ENCODE measurements at regions of chr5 and their contacts with region 1.

Region 1: GRCh38 chr5:140401362-140402257 is at the start of gene ANKHD1:
- DNase-seq: peak; percentile 99 to 100
- ATAC-seq: peak; percentile 89 to 92
- H3K4me3 ChIP-seq: peak within 1 kb of the TSS; percentile 80 to 100 (median 98)
- H3K27ac ChIP-seq: peak within 1 kb of the TSS; percentile 91 to 100 (median 98)
- H3K4me1 ChIP-seq: peaks cover 30 to 42% of the 10 kb centered on the region in 2 donors
- H3K27me3 ChIP-seq: no peaks in the 10 kb centered on the region
- CTCF ChIP-seq: no peak
- POLR2A ChIP-seq: peak; percentile 98 to 99
- total RNA-seq, gene ANKHD1: 51.3 to 93.6 (median 72.7) TPM

Region 2: GRCh38 chr5:140327589-140327988 is 74.0 kb before region 1 on chr5:
- in situ Hi-C with region 1: no loop called
- intact Hi-C with region 1: no loop called
- DNase-seq: no peak
- ATAC-seq: no peak
- H3K4me3 ChIP-seq: no peak overlapping the region
- H3K27ac ChIP-seq: no peak overlapping the region
- H3K4me1 ChIP-seq: peaks cover 19 to 20% of the 10 kb centered on the region in 2 donors
- H3K27me3 ChIP-seq: no peaks in the 10 kb centered on the region
- CTCF ChIP-seq: no peak
- POLR2A ChIP-seq: no peak

Region 3: DNA sequence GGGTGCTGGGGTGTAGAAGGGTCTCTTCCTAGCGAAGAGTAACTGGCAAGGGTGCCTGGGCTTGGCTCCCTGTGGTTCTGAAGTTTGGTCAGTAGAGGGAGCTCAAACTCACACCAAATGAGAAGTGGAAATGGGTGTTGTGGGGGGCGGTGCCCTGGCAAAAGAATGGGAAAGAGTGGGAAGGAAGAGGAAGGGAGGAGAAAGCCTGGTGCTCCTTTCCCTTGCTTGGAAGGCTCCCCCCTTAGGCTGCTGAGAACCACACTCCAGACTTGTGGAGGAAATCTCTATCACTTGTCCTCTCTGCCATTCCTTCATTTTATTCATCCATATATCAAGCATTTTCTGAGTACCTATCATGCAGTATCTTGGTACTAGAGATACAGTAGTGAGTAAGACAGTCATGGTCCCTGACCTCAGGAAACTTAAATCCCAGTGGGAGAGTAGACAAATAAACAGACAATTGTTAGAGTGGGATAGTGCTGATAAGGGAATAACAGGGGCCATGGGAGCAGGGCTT is 28.6 kb before region 1 on chr5:
- in situ Hi-C with region 1: no loop called
- intact Hi-C with region 1: loop called (anchors 2 kb)
- DNase-seq: peak in 1 of 2 donors; percentile 62
- ATAC-seq: peak; percentile 71 to 81
- H3K4me3 ChIP-seq: no peak overlapping the region
- H3K27ac ChIP-seq: no peak overlapping the region
- H3K4me1 ChIP-seq: no peaks in the 10 kb centered on the region
- H3K27me3 ChIP-seq: no peaks in the 10 kb centered on the region
- CTCF ChIP-seq: peak; percentile 55 to 84 (median 80)
- POLR2A ChIP-seq: no peak

Region 4: GRCh38 chr5:140547508-140548299 is 146.1 kb after region 1 on chr5 and contains the start of gene EIF4EBP3:
- in situ Hi-C with region 1: no loop called
- intact Hi-C with region 1: loop called (anchors 2 kb)
- DNase-seq: peak; percentile 96 to 98
- ATAC-seq: peak; percentile 71 to 75
- H3K4me3 ChIP-seq: peak within 1 kb of the TSS; percentile 54 to 79 (median 78)
- H3K27ac ChIP-seq: peak within 1 kb of the TSS; percentile 92 to 100 (median 100)
- H3K4me1 ChIP-seq: peaks cover 46 to 52% of the 10 kb centered on the region in 2 donors
- H3K27me3 ChIP-seq: no peaks in the 10 kb centered on the region
- CTCF ChIP-seq: peak; percentile 64 to 95 (median 80)
- POLR2A ChIP-seq: peak; percentile 92 to 98
- total RNA-seq, gene EIF4EBP3: 38.6 to 118 (median 51.8) TPM

Region 5: DNA sequence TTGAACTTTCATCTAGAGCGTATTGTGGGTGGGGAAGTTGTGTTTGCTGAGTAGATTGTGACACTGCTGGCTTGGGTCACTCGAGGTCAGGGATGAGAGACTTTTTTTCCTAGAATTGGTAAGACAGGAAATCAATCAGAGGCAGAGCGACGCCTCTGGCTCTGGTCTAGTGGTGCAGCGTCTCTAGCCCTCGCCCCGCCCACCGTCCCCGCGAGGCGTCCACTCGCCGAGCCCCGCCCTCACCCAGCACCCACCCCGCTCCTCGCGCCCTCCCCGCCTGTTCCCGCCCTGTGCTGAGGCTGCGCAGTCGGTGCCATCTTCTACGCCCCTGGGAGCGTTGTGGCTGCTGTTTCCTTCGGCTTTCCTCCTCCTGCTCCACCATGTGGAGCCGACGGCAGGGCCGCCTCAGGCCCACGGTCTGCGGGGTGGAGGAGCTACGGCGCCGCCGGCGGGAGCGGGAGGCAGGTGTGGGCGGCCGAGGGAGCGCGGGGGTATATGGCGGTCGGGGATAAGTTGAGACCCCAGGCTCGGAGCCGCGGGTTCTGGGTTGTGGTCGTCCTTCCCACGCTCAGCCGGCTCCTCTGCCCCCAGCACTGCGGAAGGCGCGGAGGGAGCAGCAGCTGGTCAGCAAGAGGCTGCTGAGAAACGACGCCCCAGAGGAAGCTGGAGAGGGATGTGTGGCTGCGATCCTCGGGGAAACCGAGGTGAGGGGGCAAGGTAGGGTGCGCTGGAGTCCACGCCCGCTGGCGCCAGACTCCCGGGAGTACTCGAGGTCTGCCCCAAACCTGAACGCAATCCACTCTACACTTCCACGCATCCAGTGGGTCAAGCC is 237.8 kb after region 1 on chr5 and contains the start of gene TMCO6:
- in situ Hi-C with region 1: loop called in 1 of 4 experiments (anchors 10 kb)
- intact Hi-C with region 1: loop called (anchors 1 kb)
- DNase-seq: peak; percentile 96
- ATAC-seq: peak; percentile 94
- H3K4me3 ChIP-seq: peak within 1 kb of the TSS; percentile 78 to 96 (median 86)
- H3K27ac ChIP-seq: peak within 1 kb of the TSS; percentile 90 to 97 (median 91)
- H3K4me1 ChIP-seq: peaks cover 11% of the 10 kb centered on the region in 2 donors
- H3K27me3 ChIP-seq: no peaks in the 10 kb centered on the region
- CTCF ChIP-seq: peak; percentile 49 to 77 (median 53)
- POLR2A ChIP-seq: peak; percentile 57 to 70
- total RNA-seq, gene TMCO6: 5.1 to 15.4 (median 9.5) TPM

Region 6: DNA sequence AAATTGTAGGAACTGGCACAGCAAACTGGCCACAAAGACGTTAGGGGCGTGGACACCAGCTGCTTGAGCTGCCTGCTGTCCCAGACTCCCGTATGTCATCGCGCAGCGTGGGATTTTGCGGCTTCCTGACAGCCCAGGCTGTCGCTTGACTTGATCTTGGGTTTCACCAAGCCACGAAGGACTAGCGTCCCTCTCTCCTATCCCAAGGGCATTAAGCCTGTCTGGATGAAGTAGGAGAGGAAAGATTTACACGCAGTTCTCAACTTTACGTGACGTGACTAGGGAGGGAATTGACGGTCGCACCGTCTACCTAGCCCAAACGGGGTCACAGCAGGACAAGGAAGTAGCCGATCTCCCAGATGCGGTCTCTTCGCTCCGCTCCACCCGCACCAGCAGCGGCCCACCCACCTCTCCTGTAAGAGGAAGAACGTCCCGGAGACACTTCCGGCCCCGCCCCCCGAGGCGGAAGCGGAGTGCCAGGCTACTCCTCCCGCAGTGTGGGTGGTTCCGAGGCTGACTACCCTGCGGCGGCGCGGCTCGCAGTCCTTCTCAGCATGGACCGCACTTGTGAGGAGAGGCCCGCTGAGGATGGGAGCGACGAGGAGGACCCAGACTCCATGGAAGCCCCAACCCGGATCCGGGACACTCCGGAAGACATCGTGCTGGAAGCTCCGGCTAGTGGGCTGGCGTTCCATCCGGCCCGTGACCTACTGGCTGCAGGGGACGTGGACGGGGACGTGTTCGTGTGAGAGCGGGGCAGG is 262.9 kb after region 1 on chr5 and contains the start of gene WDR55:
- in situ Hi-C with region 1: loop called in 1 of 4 experiments (anchors 25 kb)
- intact Hi-C with region 1: no loop called
- DNase-seq: peak; percentile 94 to 96
- ATAC-seq: peak; percentile 95
- H3K4me3 ChIP-seq: peak within 1 kb of the TSS; percentile 79 to 90 (median 82)
- H3K27ac ChIP-seq: peak within 1 kb of the TSS; percentile 92 to 98 (median 98)
- H3K4me1 ChIP-seq: peaks cover 16 to 20% of the 10 kb centered on the region in 2 donors
- H3K27me3 ChIP-seq: no peaks in the 10 kb centered on the region
- CTCF ChIP-seq: no peak
- POLR2A ChIP-seq: peak; percentile 76 to 84
- total RNA-seq, gene WDR55: 10.9 to 18.7 (median 15.1) TPM

Region 7: DNA sequence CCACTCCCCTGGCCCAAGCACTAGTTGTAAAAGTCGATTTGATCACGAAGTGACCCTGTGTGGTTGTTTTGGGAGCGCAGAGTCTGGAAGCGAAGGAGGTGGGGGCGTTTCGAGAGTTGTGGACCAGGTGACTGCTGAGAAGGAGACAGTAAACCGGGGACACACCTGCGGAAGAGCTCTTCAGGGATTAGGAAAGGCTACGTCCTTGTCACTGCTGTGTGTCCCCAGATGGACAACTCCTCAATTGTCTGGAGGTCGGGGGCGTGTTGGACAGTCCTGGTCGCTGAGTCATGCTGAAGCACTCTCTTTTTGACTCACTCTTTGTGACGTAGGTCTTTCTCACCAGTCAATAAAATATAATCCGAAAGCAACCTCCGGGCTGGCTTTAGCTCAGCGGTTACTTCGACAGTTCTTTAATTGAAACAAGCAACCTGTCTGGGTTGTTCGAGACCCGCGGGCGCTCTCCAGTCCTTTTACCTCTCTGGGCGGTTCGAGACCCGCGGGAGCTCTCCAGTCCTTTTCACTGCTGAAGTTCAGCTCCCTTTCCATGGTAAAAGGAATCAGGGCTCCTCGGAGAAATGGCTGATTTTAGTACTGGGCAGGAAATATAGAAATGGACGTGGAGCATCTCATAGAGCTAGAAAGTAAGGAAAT is 309.4 kb after region 1 on chr5:
- in situ Hi-C with region 1: no loop called
- intact Hi-C with region 1: loop called (anchors 5 kb)
- DNase-seq: peak; percentile 79 to 88
- ATAC-seq: peak; percentile 92 to 95
- H3K4me3 ChIP-seq: peak overlapping the region; percentile 57 to 66 (median 62)
- H3K27ac ChIP-seq: peak overlapping the region; percentile 82 to 91 (median 86)
- H3K4me1 ChIP-seq: peaks cover 0 to 13% of the 10 kb centered on the region in 2 donors
- H3K27me3 ChIP-seq: no peaks in the 10 kb centered on the region
- CTCF ChIP-seq: no peak
- POLR2A ChIP-seq: peak; percentile 56 to 63

Measured in gastrocnemius medialis (tissue), 4 donors.